H1 (cell line): ENCODE measurements at regions of chr20 and their contacts with region 1.

Region 1: DNA sequence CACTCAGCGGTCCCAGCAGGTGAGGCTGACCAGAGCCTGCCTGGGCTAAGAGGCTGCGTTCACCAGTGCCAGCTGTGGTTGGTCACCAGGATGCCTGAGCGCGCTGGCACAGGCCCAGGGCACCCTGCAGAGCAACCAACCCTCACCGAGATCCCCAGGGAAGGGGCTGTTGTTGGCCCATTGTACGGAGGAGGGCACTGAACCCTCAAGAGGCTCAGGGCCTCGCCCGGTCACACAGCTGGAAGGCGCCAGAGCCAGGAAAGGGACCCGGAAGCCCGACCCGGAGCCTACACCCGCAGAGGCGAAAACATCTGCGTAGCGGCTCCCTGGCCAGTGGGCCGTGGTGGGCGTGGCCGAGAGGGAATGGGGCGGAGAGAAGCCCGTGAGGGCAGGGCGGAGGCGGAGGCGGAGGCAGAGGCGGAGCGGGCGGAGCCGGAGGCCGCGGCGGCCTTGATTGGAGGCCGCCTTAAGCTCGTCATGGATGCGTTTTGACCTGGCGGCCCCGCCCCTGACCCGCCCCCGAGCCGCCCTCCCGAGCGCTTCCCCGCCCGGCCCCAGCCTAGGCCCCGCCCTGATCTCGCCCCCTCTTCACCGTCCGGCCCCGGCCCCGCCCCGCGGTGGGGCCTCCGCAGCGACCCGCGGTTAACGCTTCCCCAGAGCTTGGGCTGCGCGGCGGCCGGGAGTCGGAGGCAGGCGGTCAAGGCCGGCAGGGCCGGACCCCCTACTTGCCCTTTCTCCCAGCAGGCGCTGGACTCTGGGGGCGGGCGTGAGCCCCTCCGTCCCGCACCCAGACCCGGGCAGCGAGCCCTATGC is 2.2 kb upstream of the MRGBP start:
- DNase-seq: peak; percentile 86 to 98
- H3K4me3 ChIP-seq: peak overlapping the region; percentile 21 to 65 (median 46); a peak in 7 of 8 replicates
- H3K27ac ChIP-seq: no peak overlapping the region
- H3K4me1 ChIP-seq: peaks cover 0 to 11% (median 6%) of the 10 kb centered on the region in 4 experiments; a peak in 4 of 7 replicates
- H3K27me3 ChIP-seq: peaks cover 0 to 18% (median 11%) of the 10 kb centered on the region in 4 experiments; a peak in 5 of 7 replicates
- CTCF ChIP-seq: no peak
- EP300 ChIP-seq: no peak
- POLR2A ChIP-seq: no peak
- RAD21 ChIP-seq: no peak

Region 2: GRCh38 chr20:62675156-62675876 is 118.8 kb before region 1 on chr20:
- CTCF ChIA-PET with region 1: interaction called, 47 read pairs
- POLR2A ChIA-PET with region 1: interaction called, 5 read pairs
- DNase-seq: no peak
- H3K4me3 ChIP-seq: no peak overlapping the region
- H3K27ac ChIP-seq: no peak overlapping the region
- H3K4me1 ChIP-seq: no peaks in the 10 kb centered on the region
- H3K27me3 ChIP-seq: no peaks in the 10 kb centered on the region; a peak in 1 of 7 replicates
- CTCF ChIP-seq: no peak
- EP300 ChIP-seq: no peak
- POLR2A ChIP-seq: no peak
- RAD21 ChIP-seq: no peak

Region 3: DNA sequence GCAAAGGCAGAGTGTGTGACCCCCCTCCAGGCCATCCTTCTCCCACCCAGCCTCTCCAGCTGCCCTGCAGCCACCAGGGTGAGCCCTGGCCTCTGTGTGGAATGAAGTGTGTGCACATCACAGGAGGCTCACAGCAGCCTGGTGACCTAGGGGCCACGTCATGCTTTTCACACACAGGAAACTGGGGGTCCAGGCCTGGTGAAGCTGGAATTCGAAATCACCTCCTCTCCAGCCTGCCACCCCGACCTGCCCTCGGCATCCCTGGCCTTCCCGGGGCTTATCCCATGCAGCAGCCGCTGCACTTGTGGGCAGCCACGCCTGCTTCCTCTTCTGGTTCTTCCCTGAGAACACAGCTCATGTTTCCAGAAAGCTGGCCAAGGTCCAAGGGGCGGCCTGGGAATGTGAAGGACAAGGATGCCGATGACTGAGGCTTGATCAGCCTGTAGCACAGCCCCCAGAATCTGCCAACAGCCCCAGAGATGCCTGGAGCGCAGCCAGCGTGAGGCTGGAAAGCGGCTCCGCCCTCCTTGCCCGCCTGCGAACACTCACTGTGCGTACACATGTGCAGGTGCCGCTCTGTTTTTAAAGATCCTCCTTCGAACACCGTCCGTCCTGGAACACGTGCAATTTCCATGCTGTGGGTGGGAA is 89.7 kb before region 1 on chr20:
- CTCF ChIA-PET with region 1: interaction called, 38 read pairs
- POLR2A ChIA-PET with region 1: no interaction called
- DNase-seq: no peak
- H3K4me3 ChIP-seq: no peak overlapping the region
- H3K27ac ChIP-seq: no peak overlapping the region
- H3K4me1 ChIP-seq: peaks cover 0 to 8% (median 7%) of the 10 kb centered on the region in 4 experiments; a peak in 5 of 7 replicates
- H3K27me3 ChIP-seq: peaks cover 12 to 21% (median 16%) of the 10 kb centered on the region in 4 experiments
- CTCF ChIP-seq: no peak
- EP300 ChIP-seq: no peak
- POLR2A ChIP-seq: no peak
- RAD21 ChIP-seq: no peak

Region 4: DNA sequence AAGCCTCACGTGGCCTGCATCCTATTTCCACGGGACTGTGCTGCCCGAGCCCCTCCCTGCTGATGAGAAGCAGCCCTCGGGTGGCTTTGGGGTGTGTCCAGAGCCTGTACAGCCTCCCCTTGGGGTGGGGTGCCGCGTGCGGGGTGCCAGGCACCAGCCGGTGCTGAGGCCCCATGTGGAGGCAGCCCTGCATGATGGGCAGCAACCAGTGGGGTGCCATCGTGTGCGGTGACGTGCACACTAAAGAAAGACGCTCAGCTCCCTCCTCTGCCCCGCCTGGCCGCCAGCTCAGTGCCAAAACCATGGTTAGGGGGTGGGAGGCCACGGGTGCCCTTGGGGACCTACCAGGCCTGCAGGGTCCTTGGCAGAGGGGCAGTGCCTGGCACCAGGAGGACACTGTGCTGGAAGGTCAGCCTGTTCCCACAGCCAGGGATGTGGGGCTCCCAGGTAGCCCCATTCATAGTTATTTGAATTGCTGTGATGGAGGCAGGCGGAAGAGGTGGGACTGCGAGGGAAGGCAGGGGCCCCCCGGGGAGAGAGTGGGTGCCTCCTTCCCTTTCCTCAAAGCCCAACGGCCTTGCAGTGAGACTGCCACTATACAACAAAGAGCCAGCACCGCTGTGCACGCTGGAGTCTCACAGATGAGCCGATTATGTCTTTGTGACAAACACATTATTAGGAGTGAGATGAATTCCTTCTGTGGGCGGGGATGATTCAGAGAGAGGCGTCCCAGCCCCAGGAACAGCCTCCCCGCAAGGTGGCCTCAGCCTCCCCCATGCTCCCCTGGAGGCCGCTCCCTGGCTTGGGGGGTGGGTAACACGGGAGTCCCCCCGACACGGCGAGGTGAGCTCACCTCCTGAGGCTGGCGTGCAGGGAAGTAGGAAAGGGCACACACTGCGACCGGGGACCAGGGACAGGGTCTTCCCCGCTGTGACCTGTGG is 59.0 kb before region 1 on chr20:
- CTCF ChIA-PET with region 1: interaction called, 12 read pairs
- POLR2A ChIA-PET with region 1: no interaction called
- DNase-seq: no peak
- H3K4me3 ChIP-seq: no peak overlapping the region
- H3K27ac ChIP-seq: no peak overlapping the region
- H3K4me1 ChIP-seq: peaks cover 0 to 2% (median 0%) of the 10 kb centered on the region in 4 experiments; a peak in 1 of 7 replicates
- H3K27me3 ChIP-seq: 0 out of 7 replicates have a peak, but pooled peaks cover 0 to 3% (median 0%) of the 10 kb centered on the region in 4 experiments
- CTCF ChIP-seq: no peak
- EP300 ChIP-seq: no peak
- POLR2A ChIP-seq: no peak
- RAD21 ChIP-seq: no peak

Region 5: DNA sequence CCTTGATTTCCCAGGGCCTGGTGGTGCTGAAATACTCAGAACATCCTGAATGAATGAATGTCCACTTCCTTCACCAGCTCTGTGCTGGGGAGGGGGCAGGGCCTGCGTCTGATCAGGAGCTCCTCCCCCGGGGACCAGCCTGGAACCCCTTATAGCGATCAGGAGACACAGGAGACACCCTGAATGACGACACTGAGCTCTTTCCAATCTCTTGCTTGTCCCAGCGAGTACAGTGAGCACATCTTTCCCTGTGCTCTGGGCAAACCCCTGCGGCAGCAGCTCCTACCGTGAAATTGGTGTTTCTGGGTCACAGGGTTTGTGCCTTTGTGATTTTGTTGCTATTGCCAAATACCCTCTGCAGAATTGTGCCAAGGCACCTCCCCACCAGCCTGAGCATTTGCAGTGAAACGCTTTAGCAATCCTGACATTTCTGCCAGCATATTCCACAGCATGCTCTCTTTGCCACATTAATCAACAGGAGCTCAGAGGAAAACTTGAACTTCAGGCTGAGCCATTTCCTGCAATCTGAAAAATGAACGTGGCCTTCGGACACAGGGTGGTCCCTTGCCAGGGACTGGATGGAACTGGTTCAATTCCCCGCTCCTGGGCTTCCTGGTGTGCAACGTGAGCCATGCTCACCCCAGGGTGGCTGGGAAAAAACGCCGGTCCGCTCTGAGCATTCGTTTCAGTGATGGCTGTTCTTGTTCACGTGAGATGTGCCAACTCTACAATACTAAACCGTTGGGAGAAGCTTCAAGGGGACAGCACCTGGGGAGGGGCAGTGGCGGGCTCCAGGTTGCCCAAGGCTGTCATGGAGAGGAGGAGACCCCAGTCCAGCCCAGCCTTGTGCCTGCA is 20.9 kb before region 1 on chr20:
- CTCF ChIA-PET with region 1: interaction called, 35 read pairs
- POLR2A ChIA-PET with region 1: no interaction called
- DNase-seq: no peak
- H3K4me3 ChIP-seq: no peak overlapping the region
- H3K27ac ChIP-seq: no peak overlapping the region
- H3K4me1 ChIP-seq: peaks cover 0 to 15% (median 4%) of the 10 kb centered on the region in 4 experiments; a peak in 4 of 7 replicates
- H3K27me3 ChIP-seq: no peaks in the 10 kb centered on the region
- CTCF ChIP-seq: no peak
- EP300 ChIP-seq: no peak
- POLR2A ChIP-seq: no peak
- RAD21 ChIP-seq: no peak

Region 6: DNA sequence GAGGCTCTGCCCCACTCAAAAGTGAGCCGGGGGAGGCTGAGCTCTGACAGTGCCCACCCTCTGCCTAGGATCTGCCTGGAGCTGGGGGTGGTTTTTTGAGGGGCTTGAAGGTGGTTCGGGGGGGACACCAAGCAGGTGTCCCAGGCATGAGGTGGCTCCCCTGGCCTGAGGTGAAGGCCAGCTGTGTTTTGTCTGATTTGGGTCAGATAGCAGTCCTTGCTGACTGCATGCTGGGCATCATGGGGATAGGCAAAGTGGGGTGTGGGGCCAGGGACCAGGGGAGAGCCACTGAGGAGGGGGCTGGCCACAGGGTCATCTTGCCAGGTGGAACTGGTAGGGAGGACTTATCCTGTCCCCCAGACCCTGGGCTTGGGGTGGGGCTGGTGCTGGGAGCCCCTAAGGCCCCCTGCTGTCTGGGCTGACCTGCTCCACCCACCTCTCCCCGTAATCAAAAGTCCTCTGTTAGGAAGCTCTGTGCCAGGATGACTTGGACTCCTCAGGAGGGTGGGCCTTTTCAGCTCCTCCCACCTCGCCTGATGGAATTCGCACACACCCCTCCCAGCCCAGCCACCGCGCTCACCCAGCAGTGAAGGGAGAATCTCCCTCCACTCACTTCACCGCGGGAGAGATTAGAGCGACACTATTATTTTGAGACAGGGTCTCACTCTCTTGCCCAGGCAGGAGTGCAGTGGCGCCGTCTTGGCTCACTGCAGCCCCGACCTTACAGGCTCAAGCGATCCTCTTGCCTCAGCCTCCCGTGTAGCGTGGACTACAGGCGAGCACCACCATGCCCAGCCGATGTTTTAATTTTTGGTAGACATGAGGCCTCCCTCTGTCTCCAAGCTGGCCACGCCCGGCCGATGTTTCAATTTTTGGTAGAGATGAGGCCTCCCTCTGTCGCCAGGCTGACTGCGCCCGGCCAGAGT is 21.2 kb after region 1 on chr20:
- CTCF ChIA-PET with region 1: interaction called, 15 read pairs
- POLR2A ChIA-PET with region 1: interaction called, 10 read pairs
- DNase-seq: peak; percentile 54 to 73
- H3K4me3 ChIP-seq: peak overlapping the region; percentile 54 to 71 (median 63)
- H3K27ac ChIP-seq: no peak overlapping the region; the same call in 1 of the 2 replicates
- H3K4me1 ChIP-seq: peaks cover 0 to 17% (median 11%) of the 10 kb centered on the region in 4 experiments; a peak in 5 of 7 replicates
- H3K27me3 ChIP-seq: peaks cover 0 to 8% (median 2%) of the 10 kb centered on the region in 4 experiments; a peak in 2 of 7 replicates
- CTCF ChIP-seq: no peak
- EP300 ChIP-seq: no peak
- POLR2A ChIP-seq: no peak
- RAD21 ChIP-seq: no peak

Region 7: DNA sequence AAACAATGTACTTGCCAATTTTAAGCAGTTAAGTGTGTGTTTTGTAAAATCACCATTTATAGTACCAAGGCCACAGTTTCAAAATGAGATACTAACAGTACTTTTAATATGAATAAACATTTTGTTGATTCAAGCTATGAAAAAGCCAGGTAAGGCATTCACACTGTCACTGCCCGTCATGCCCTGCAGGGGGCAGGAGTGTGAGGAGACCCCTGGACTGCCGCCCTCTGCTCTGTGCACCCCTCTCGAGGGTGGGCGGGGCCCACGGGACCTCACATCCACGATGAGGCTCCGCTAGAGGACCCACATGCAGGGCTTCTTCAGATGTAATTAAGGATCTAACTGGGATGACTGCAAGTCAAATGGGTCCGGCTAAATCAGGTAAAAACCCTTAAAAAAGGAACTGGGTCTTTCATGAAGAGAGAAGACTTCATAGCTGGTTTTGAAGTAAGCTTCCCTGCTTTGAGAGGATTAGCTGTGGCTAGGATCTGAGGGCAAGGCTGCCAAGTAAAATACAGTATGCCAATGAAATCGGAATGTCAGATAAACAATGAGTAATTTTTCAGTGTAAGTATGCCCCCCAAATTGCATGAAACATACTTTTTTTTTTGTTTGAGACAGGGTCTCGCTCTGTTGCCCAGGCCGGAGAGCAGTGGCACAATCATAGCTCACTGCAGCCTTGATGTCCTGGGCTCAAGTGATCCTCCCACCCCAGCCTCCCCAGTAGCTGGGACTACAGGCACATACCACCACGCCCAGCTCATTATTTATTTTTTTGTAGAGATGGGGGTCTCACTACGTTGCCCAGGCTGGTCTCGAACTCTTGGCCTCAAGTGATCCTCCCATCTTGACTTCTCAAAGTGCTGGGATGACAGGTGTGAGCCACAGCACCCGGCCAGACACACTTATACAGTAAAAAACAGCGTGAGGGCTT is 113.5 kb after region 1 on chr20:
- CTCF ChIA-PET with region 1: no interaction called
- POLR2A ChIA-PET with region 1: no interaction called
- DNase-seq: no peak
- H3K4me3 ChIP-seq: no peak overlapping the region
- H3K27ac ChIP-seq: no peak overlapping the region
- H3K4me1 ChIP-seq: no peaks in the 10 kb centered on the region; a peak in 2 of 7 replicates
- H3K27me3 ChIP-seq: no peaks in the 10 kb centered on the region
- CTCF ChIP-seq: peak; percentile 42 to 81 (median 73); a peak in 3 of 4 replicates
- EP300 ChIP-seq: no peak
- POLR2A ChIP-seq: no peak
- RAD21 ChIP-seq: peak; percentile 47 to 52